AG04450 (cell line): ENCODE measurements at regions of chr13 and their contacts with region 1.

Region 1: GRCh38 chr13:44726214-44726613 is 150.1 kb upstream of the TSC22D1 start:
- DNase-seq: peak; percentile 81
- H3K4me3 ChIP-seq: no peak overlapping the region
- H3K27ac ChIP-seq: peak overlapping the region; percentile 85
- H3K27me3 ChIP-seq: no peaks in the 10 kb centered on the region
- CTCF ChIP-seq: no peak

Region 2: DNA sequence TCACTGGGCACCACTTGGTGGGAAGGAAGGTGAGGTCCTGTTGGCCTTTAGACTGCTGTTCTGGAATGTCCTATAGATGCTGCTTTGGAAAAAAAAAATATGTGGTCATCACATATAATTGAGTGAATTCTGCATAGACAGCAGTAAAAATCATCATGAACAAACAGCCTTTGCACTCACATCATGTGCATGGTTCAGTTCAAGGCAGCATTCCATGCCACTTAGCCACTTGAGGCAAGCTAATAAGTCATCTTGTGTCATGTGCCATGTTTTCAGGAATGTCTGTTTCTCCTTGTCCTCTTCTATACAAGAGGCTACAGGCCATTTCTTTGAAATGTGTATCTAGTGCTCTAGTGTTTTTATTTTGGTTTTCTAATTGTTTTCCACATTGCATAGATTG is 106.2 kb before region 1 on chr13:
- CTCF ChIA-PET with region 1: no interaction called
- POLR2A ChIA-PET with region 1: no interaction called
- DNase-seq: no peak
- H3K4me3 ChIP-seq: no peak overlapping the region
- H3K27ac ChIP-seq: no peak overlapping the region
- H3K27me3 ChIP-seq: no peaks in the 10 kb centered on the region
- CTCF ChIP-seq: no peak

Region 3: GRCh38 chr13:44703371-44703770 is 22.8 kb before region 1 on chr13:
- CTCF ChIA-PET with region 1: no interaction called
- POLR2A ChIA-PET with region 1: no interaction called
- DNase-seq: no peak
- H3K4me3 ChIP-seq: no peak overlapping the region
- H3K27ac ChIP-seq: no peak overlapping the region
- H3K27me3 ChIP-seq: no peaks in the 10 kb centered on the region
- CTCF ChIP-seq: no peak

Region 4: DNA sequence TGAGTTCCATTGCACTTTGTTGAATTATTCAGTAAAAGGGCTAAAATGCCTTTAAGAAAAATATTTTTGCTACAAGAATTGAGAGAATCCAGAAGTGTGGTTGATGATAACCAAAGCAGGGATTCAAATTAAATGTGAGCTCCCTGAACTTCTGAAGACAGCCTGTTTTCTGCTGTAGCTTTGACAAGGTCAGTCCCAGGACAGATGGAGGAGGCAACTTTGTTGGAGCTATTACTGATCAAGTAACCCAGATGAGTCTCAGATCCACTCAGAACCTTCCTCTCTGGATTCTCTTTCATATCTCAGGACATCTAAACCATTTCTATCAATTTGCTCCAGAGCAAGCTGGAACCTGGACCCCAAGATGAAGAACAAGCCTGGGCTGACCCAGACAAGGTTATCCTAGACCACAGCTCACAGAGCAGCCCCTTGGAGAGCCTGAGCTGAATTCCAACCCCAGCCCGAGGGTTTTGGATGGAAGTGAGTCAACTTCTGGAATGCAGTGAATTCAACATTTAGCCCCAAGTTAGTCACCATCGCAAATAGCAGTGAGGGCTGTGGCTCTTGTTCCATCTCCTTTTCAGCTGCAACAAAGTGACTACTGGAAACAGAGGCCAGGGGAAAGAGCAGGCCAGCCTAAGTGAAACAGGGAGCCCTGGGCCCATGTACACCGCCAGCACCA is 12.3 kb before region 1 on chr13:
- CTCF ChIA-PET with region 1: no interaction called
- POLR2A ChIA-PET with region 1: interaction called, 11 read pairs
- DNase-seq: peak; percentile 84
- H3K4me3 ChIP-seq: no peak overlapping the region
- H3K27ac ChIP-seq: peak overlapping the region; percentile 95
- H3K27me3 ChIP-seq: no peaks in the 10 kb centered on the region
- CTCF ChIP-seq: no peak

Region 5: DNA sequence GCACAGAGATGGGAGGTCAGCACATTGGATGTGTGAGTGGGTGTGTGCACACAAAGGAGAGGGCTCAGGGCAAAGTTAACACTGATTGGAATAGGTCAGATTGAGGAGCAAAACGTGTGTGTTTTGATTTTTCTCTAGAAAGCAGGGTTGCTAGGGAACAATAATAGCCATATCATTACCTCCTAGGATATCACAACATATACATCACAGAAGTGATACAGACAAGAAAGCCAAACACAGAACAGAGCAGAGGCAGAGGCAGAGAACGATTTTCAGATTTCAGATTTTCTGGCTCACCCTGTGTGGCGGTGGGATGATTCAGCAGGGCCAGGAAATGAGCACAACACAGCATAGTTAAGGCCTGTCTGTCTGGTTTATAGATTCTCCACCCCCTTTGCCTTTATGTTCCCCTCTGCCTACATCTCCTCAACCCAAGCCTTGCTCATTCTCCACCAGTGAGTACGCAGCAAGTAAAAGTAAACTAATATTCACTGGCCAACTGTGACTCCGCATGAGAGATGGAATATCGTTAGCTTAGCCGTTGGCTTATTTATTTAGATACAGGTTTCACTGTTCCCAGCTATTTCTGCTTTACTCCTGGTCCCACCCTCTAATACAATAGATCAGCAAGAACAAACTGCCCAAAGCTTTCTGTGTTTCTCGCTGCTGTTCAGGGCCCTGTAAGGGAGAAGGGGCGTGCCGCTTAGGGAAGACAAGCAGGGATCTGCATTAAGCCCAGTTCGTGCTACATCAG is 32.6 kb after region 1 on chr13:
- CTCF ChIA-PET with region 1: no interaction called
- POLR2A ChIA-PET with region 1: no interaction called
- DNase-seq: peak; percentile 87
- H3K4me3 ChIP-seq: no peak overlapping the region; the same call in 1 of the 2 replicates
- H3K27ac ChIP-seq: peak overlapping the region; percentile 84
- H3K27me3 ChIP-seq: no peaks in the 10 kb centered on the region
- CTCF ChIP-seq: no peak

Region 6: GRCh38 chr13:44778766-44779484 is 52.7 kb after region 1 on chr13:
- CTCF ChIA-PET with region 1: no interaction called
- POLR2A ChIA-PET with region 1: no interaction called
- DNase-seq: no peak
- H3K4me3 ChIP-seq: no peak overlapping the region
- H3K27ac ChIP-seq: no peak overlapping the region
- H3K27me3 ChIP-seq: no peaks in the 10 kb centered on the region
- CTCF ChIP-seq: no peak